Mammary epithelial cell (primary cell): ENCODE measurements at regions of chrX and their contacts with region 1.

Region 1: GRCh38 chrX:111652719-111653118 is 28.3 kb upstream of the ALG13 start:
- DNase-seq: no peak
- H3K4me3 ChIP-seq: no peak overlapping the region
- H3K27ac ChIP-seq: no peak overlapping the region
- H3K4me1 ChIP-seq: no peaks in the 10 kb centered on the region
- H3K27me3 ChIP-seq: no peaks in the 10 kb centered on the region
- CTCF ChIP-seq: peak in 1 of 2 donors; percentile 35

Region 2: DNA sequence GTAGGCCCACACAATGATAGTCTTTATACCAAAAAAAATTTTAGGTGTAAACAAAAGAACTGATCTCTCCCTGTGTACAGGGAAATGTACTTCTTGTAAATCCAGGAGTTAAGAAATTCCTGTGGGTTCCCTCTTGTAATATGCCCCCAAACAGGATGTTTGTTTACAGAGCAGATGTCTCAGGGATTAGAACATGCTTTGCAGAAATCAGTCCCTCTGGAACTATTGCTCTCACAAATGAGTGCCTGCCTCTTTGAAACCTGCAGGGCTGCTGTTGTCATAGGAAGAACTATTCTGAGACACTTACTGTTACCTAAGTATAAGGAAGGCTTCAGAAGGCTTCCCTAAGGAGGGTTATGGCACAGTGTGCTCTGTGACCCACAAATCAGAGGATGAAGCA is 521.1 kb before region 1 on chrX:
- CTCF ChIA-PET with region 1: no interaction called
- dilution Hi-C with region 1: no loop called
- in situ Hi-C with region 1: no loop called
- intact Hi-C with region 1: no loop called
- DNase-seq: no peak
- H3K4me3 ChIP-seq: no peak overlapping the region
- H3K27ac ChIP-seq: no peak overlapping the region
- H3K4me1 ChIP-seq: no peaks in the 10 kb centered on the region
- H3K27me3 ChIP-seq: peaks cover 3% of the 10 kb centered on the region
- CTCF ChIP-seq: no peak

Region 3: GRCh38 chrX:111168314-111168713 is 484.4 kb before region 1 on chrX:
- CTCF ChIA-PET with region 1: no interaction called
- dilution Hi-C with region 1: no loop called
- in situ Hi-C with region 1: no loop called
- intact Hi-C with region 1: loop called (anchors 10 kb)
- DNase-seq: peak; percentile 12
- H3K4me3 ChIP-seq: no peak overlapping the region
- H3K27ac ChIP-seq: no peak overlapping the region
- H3K4me1 ChIP-seq: no peaks in the 10 kb centered on the region
- H3K27me3 ChIP-seq: no peaks in the 10 kb centered on the region
- CTCF ChIP-seq: peak in 1 of 2 donors; percentile 49

Region 4: DNA sequence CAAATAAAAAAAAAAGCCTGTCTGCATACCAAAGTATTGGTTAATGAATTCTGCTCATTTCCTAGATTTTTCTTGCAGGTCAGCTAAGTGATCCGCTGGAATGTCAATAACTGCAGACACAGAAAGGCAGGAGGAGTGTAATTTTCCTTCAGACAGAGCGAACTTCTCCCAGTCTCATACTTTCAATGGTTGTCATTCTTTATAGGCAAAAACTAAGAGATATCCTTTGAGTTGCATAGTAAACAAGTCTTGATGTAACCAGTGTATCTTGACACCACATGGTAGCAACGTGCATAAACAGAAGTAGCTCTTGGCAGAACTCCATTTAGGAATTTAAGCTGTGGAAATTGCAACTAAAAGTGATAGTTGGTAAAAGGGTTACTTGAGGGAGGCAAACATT is 390.6 kb before region 1 on chrX:
- CTCF ChIA-PET with region 1: no interaction called
- dilution Hi-C with region 1: no loop called
- in situ Hi-C with region 1: no loop called
- intact Hi-C with region 1: loop called (anchors 10 kb)
- DNase-seq: no peak
- H3K4me3 ChIP-seq: no peak overlapping the region
- H3K27ac ChIP-seq: no peak overlapping the region
- H3K4me1 ChIP-seq: no peaks in the 10 kb centered on the region
- H3K27me3 ChIP-seq: peaks cover 12% of the 10 kb centered on the region
- CTCF ChIP-seq: no peak

Region 5: GRCh38 chrX:111402344-111402743 is 250.4 kb before region 1 on chrX:
- CTCF ChIA-PET with region 1: no interaction called
- dilution Hi-C with region 1: no loop called
- in situ Hi-C with region 1: no loop called
- intact Hi-C with region 1: no loop called
- DNase-seq: no peak
- H3K4me3 ChIP-seq: no peak overlapping the region
- H3K27ac ChIP-seq: no peak overlapping the region
- H3K4me1 ChIP-seq: no peaks in the 10 kb centered on the region
- H3K27me3 ChIP-seq: peaks cover 5% of the 10 kb centered on the region
- CTCF ChIP-seq: no peak

Region 6: GRCh38 chrX:111892375-111892774 is 239.7 kb after region 1 on chrX:
- CTCF ChIA-PET with region 1: no interaction called
- dilution Hi-C with region 1: no loop called
- in situ Hi-C with region 1: no loop called
- intact Hi-C with region 1: no loop called
- DNase-seq: no peak
- H3K4me3 ChIP-seq: no peak overlapping the region
- H3K27ac ChIP-seq: no peak overlapping the region
- H3K4me1 ChIP-seq: no peaks in the 10 kb centered on the region
- H3K27me3 ChIP-seq: peaks cover 5% of the 10 kb centered on the region
- CTCF ChIP-seq: no peak